HEK293 (cell line): ENCODE measurements at regions of chr9 and their contacts with region 1.

Region 1: DNA sequence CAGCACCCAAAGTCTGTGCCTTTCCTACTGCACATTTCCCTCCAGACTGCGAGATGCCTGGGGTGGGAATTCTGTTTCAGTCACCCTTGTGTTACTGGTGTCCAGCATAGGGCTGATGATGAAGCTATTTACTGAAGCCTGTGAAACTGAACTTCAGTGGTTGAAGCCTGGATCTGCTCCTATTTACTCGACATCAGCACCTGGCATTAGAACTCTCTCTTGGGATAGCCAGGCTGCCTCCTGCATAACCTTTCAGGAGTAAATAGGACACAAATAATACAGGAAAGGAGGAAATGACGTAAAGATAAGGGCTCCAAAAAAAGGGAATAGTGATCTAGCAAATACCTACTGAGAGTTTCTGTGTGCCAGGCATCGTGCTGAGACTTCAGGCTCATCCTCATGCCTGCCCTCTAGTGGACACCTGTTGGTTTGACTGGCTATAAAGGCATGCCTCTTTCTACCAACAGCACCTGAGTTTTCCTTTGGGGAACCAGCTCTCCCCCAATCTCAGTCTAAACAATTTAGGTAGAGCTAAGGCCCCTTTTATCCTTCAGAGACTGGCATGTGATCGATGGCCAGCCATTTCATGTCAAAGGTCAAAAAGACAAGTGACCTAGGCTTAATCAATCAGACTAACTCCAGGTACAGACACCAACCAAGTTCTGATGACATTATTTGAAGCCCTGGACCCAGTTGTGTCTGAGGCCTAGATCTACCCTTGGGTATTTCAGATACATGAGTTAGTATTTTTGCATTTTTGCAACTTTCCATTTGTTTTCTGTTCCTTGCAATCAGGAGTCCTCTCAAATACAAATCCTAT is 192.1 kb upstream of the TRIM32 start:
- H3K4me3 ChIP-seq: no peak overlapping the region
- H3K27ac ChIP-seq: no peak overlapping the region
- H3K4me1 ChIP-seq: no peaks in the 10 kb centered on the region
- CTCF ChIP-seq: no peak

Region 2: DNA sequence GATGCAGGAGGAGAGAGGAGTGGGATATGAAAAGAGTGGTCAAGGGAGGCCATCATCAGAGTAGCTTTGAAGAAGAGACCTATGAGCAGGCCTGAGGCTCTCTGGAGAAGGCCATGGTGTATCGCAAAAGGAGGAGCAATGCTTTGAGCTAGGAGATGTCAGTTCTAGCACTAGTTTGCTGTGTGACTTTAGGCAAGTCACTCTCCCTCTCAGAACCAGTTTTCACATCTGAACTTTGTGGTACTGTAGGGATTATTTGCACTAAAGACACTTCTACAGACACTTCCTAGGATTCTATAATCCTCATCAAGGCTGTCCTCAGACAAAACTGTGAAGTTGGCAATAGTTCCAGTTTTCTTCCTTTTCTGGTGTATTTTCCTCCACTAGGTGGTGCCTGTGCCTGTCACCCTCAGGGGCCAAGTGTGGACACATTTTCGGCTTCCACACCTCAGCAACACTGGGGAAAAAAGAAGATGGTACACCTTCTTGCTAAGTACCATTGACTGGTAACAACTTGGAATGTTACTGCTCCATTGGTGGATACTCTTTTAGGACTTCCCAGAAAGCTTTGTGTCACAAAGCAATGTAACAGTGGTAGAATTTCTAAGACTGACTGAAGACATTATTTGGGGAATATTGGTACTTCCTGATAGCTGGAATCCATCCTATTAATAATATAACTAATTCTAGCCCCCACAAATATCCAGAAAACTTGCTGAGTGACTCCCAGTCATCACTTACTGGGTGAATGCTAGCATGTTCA is 331.6 kb before region 1 on chr9:
- CTCF ChIA-PET with region 1: interaction called, 11 read pairs
- POLR2A ChIA-PET with region 1: no interaction called
- H3K4me3 ChIP-seq: no peak overlapping the region
- H3K27ac ChIP-seq: no peak overlapping the region
- H3K4me1 ChIP-seq: no peaks in the 10 kb centered on the region
- CTCF ChIP-seq: no peak

Region 3: DNA sequence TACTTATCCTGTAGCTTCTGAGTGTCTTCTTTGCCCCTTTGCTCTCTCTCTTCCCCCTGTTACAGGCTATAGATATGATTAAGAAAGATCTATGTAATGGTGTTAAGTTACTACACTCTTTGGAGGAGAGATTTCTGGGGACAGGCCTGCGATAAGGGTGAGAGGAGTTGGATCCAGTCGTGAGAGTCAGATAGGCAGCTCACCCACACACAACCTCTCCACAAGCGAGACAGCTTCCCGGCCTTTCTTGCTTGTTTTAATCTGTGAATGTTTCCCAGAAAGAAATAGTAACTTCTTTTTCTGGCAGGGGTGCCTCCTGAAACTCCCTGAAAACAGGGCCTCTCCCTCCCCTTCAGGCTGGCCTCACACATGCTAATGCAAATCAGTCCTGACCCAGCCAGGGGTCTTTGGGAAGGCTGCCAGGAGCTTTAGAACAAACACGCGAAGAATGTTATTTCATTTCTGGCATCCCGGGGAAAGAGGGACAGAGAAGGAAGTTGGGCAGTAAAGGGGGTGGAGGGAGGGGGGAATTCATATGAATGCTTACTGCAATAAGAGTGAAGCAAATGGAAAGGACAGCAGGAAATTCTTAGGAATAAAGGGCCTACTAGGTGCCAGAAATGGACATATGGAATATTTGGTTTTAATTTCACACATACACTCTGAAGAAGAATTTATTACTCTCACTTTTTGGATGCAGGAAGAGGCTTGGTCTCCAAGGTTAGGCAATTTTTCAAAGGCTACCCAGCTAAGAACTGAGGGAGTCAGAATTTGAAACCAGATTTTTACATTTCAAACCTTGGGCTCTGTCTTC is 23.7 kb before region 1 on chr9:
- CTCF ChIA-PET with region 1: interaction called, 10 read pairs
- POLR2A ChIA-PET with region 1: no interaction called
- H3K4me3 ChIP-seq: no peak overlapping the region
- H3K27ac ChIP-seq: no peak overlapping the region
- H3K4me1 ChIP-seq: no peaks in the 10 kb centered on the region
- CTCF ChIP-seq: no peak

Region 4: DNA sequence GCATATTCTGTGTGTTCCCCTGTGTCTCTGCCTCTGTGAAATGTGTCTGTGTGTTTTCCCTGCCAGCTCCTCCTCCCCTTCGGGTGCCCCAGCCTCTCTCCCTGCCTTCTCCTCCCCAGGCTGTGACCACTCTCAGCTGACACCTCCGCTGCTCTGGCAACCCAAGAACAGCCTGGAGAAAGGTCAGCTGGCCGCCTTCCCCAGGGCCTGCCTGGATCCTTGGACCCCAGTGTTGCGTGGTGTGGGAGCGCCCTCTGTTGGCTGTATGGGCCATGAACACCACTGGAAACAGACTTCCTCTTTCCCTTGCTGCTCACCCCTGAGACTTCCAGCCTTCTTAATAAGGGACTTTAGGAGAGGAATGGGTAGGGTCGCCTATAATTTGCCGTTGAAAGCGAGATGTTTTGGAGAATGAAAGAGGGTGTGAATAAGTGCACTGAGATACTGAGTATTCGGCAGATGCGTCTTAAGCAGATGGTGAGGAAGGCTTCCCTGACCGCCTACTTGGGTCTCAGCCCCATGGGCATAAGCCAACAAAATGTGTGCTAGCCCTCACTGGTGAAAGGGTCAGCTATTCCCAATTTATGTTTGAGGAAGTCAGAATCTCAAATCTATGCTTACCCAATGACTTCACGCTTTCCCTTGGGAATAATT is 77.2 kb after region 1 on chr9:
- CTCF ChIA-PET with region 1: interaction called, 11 read pairs
- POLR2A ChIA-PET with region 1: no interaction called
- H3K4me3 ChIP-seq: no peak overlapping the region
- H3K27ac ChIP-seq: no peak overlapping the region
- H3K4me1 ChIP-seq: peaks cover 4% of the 10 kb centered on the region
- CTCF ChIP-seq: peak; percentile 80